ENCODE measurements at regions of chr2 and their contacts with region 1.

Region 1: GRCh38 chr2:72527424-72527823 is 298.4 kb downstream of the EXOC6B start:
- DNase-seq: no peak
- H3K4me3 ChIP-seq: no peak overlapping the region
- H3K27ac ChIP-seq: no peak overlapping the region
- H3K4me1 ChIP-seq: peaks cover 45% of the 10 kb centered on the region
- H3K27me3 ChIP-seq: no peaks in the 10 kb centered on the region
- CTCF ChIP-seq: no peak

Region 2: GRCh38 chr2:72330668-72331067 is 196.8 kb before region 1 on chr2:
- CTCF ChIA-PET with region 1: no interaction called
- POLR2A ChIA-PET with region 1: interaction called, 13 read pairs
- intact Hi-C with region 1: no loop called
- DNase-seq: peak; percentile 20
- H3K4me3 ChIP-seq: no peak overlapping the region
- H3K27ac ChIP-seq: no peak overlapping the region
- H3K4me1 ChIP-seq: peaks cover 20% of the 10 kb centered on the region
- H3K27me3 ChIP-seq: no peaks in the 10 kb centered on the region
- CTCF ChIP-seq: no peak

Region 3: GRCh38 chr2:72439892-72440291 is 87.5 kb before region 1 on chr2:
- CTCF ChIA-PET with region 1: interaction called, 10 read pairs
- POLR2A ChIA-PET with region 1: no interaction called
- intact Hi-C with region 1: no loop called
- DNase-seq: no peak
- H3K4me3 ChIP-seq: no peak overlapping the region
- H3K27ac ChIP-seq: no peak overlapping the region
- H3K4me1 ChIP-seq: no peaks in the 10 kb centered on the region
- H3K27me3 ChIP-seq: no peaks in the 10 kb centered on the region
- CTCF ChIP-seq: no peak

Region 4: DNA sequence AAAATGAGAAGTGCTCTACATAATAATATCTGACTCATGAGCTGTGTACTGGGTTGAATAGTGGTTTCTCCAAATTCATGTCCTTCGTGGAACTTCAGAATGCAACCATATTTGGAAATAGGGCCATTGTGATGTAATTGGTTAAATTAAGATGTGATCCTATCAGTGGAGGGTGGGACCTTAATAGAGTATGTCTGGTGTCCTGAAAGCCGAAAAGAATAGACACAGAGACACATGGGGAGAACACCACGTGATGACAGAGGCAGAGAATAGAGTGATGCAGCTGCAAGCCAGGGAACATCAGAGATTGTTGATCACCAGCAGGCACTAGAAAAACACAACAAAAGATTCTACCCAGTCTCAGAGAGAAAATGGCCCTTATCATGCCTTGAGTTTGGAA is 11.7 kb before region 1 on chr2:
- CTCF ChIA-PET with region 1: no interaction called
- POLR2A ChIA-PET with region 1: interaction called, 15 read pairs
- intact Hi-C with region 1: no loop called
- DNase-seq: peak; percentile 97
- H3K4me3 ChIP-seq: peak overlapping the region; percentile 50
- H3K27ac ChIP-seq: peak overlapping the region; percentile 99
- H3K4me1 ChIP-seq: peaks cover 40% of the 10 kb centered on the region
- H3K27me3 ChIP-seq: no peaks in the 10 kb centered on the region
- CTCF ChIP-seq: no peak

Measured in A673 (cell line).